Psoas muscle (tissue), 8 donors: ENCODE measurements at regions of chr11 and their contacts with region 1.

Region 1: DNA sequence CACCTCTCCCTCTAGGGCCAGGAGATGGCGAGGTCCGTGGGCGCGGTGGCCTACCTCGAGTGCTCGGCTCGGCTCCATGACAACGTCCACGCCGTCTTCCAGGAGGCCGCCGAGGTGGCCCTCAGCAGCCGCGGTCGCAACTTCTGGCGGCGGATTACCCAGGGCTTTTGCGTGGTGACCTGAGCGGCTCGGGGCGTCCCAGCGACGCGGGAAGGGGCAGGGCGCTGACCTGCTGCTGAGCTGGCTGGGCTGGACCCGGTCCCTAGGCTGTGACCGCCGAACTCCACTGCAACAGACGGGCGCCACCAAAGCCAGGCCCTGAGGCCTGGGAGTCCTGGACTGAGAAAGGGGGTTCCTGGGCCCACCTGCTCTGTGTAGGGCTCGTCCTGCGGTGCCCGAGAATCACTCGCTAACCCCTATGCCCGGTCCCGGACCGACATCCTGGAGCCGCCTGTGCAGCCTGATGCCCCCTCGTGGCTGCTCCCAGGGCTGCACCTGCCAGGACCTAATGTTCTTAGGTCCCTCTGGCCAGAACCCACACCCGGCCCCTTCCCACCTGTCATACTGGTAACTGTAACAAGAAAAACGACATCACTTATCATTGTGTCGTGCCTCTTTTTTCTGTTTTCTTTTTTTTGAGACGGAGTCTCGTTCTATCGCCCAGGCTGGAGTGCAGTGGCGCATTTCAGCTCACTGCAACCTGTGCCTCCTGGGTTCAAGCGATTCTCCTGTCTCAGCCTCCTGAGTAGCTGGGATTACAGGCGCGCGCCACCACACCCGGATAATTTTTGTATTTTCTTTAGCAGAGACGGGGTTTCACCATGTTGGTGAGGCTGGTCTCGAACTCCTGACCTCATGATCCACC is 15.0 kb downstream of the RHOD start:
- DNase-seq: peak; percentile 74 to 82
- ATAC-seq: peak; percentile 83 to 94 (median 87)
- H3K4me3 ChIP-seq: peak overlapping the region; percentile 53
- H3K27ac ChIP-seq: no peak overlapping the region
- H3K4me1 ChIP-seq: no peaks in the 10 kb centered on the region
- H3K27me3 ChIP-seq: no peaks in the 10 kb centered on the region
- CTCF ChIP-seq: peak; percentile 79

Region 2: GRCh38 chr11:67053896-67054842 is 17.5 kb before region 1 on chr11:
- intact Hi-C with region 1: loop called in 1 of 2 experiments (anchors 2 kb)
- DNase-seq: peak; percentile 49 to 66
- ATAC-seq: peak; percentile 55 to 74 (median 60)
- H3K4me3 ChIP-seq: no peak overlapping the region
- H3K27ac ChIP-seq: peak overlapping the region; percentile 87
- H3K4me1 ChIP-seq: peaks cover 27% of the 10 kb centered on the region
- H3K27me3 ChIP-seq: no peaks in the 10 kb centered on the region
- CTCF ChIP-seq: peak; percentile 61